Left cardiac atrium (tissue), 4 donors: ENCODE measurements at regions of chr13 and their contacts with region 1.

Region 1: DNA sequence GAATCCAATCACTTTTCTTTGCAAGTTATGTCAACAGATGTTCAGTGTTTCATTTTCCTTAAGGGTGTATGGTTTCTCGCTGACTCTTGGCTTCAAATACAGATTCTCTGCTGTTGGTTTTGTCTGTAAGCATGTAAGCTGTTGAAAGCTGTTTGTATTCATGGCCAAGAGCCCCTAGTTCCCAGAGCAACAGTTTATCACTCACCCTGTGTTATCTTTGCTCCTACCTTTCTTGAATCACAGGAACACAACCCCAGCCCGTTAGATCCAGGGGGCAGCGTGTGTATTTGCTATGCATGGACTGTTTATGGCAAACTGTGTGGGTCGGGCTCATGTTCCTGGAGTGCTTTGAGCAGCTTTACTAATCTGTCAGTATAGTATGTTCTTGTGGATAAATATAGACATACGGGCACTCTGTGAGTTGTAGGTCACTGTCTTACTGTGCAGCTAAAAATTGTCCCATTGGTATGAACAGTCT is 28.9 kb downstream of the FRY start:
- DNase-seq: no peak
- ATAC-seq: peak; percentile 75 to 77

Region 2: GRCh38 chr13:32117701-32118100 is 57.3 kb after region 1 on chr13:
- intact Hi-C with region 1: loop called in 1 of 2 experiments (anchors 10 kb)
- DNase-seq: peak; percentile 62
- ATAC-seq: peak; percentile 94 to 96

Region 3: DNA sequence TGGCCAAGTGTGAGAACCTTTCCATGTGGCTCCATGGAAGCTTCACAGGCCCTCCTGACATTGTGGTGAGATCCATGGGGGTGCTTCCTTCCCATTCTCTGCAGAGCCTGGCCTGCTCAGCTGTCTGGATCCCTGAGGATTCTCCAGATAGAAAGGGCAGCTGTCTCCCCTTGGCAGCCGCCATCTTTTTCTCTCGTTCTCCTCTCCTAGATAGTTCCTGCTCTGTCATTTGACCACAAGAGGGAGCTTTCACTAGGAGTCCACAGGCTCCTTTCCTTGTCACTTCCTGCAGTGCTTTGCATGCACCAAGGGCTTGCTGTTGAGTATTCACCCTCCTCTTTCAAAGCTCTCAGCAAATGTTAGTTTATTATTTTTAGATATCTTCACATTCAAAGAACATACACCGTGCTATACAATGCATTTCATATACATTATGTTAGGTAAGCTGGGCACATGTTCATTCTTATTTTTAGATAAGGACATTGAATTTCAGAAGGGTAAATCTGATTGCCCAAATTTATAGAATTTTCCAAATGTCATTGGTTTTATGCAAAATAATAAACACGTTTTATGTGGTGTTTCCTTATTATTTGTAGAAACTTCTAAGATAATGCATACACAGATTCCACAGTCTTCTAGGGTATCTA is 104.3 kb after region 1 on chr13:
- intact Hi-C with region 1: loop called in 1 of 2 experiments (anchors 10 kb)
- DNase-seq: no peak
- ATAC-seq: peak; percentile 68 to 71

Region 4: GRCh38 chr13:32496599-32497160 is 436.2 kb after region 1 on chr13:
- intact Hi-C with region 1: no loop called
- DNase-seq: no peak
- ATAC-seq: peak in 1 of 2 donors; percentile 46